IMR-90 (cell line): ENCODE measurements at regions of chr3 and their contacts with region 1.

Region 1: GRCh38 chr3:194503081-194503531 is 16.3 kb upstream of the ATP13A3 start:
- DNase-seq: peak; percentile 87
- ATAC-seq: peak; percentile 83
- H3K4me3 ChIP-seq: no peak overlapping the region
- H3K27ac ChIP-seq: peak overlapping the region; percentile 95; the same call in 1 of the 2 replicates
- H3K4me1 ChIP-seq: peaks cover 13% of the 10 kb centered on the region
- H3K27me3 ChIP-seq: no peaks in the 10 kb centered on the region
- CTCF ChIP-seq: no peak
- POLR2A ChIP-seq: no peak
- RAD21 ChIP-seq: no peak

Region 2: DNA sequence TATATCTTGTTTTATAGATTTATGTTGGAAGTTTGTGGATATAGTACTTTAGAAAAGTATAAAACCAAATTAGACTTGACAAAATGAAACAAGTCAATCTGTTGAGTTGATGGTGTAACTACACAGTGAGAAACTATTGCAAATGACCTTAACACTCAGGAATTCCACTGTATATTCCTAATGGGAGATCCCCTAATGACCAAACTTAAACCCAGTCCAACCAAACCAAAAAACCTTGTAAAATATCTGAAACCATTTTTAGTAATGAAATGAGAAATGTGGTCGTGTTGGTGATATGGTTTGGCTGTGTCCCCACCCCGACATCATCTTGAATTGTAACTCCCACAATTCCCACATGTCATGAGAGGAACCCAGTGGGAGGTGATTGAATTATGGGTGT is 15.5 kb after region 1 on chr3:
- CTCF ChIA-PET with region 1: no interaction called
- POLR2A ChIA-PET with region 1: no interaction called
- dilution Hi-C with region 1: no loop called
- in situ Hi-C with region 1: no loop called
- intact Hi-C with region 1: loop called (anchors 2 kb)
- DNase-seq: peak; percentile 82
- ATAC-seq: peak; percentile 60
- H3K4me3 ChIP-seq: no peak overlapping the region
- H3K27ac ChIP-seq: peak overlapping the region; percentile 1; the same call in 1 of the 2 replicates
- H3K4me1 ChIP-seq: peaks cover 15% of the 10 kb centered on the region
- H3K27me3 ChIP-seq: no peaks in the 10 kb centered on the region
- CTCF ChIP-seq: no peak
- POLR2A ChIP-seq: no peak
- RAD21 ChIP-seq: no peak